Head of caudate nucleus (tissue), 42 donors: ENCODE measurements at regions of chr12 and their contacts with region 1.

Region 1: DNA sequence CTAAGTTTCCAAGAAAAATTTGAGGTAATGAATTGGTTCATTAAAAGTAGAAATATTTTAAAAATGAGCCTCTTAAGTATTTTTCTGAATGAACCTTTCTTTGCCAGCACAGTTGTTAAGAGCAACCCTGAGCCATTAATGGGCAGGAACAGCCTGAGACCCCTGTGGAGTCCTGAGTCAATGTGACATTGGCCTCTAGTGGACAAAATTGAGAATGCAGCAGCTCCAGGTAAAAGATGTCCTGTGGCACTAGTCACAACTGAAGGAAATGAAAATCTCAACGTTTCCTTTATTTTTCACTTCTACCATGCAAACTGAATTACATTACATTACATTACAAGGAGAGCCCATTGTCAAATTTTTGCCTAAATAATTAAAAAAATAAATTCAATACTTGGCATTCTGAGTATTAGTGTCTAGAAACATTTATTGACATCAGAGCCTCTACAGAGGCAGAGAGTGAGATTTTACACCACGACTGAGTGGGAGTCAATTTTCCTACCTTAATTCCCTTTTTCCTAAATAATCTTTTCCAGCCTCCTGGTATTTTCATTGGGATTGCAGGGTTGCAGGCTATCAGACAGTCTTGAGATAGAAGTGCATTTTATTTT is 135.7 kb downstream of the PPM1H start:
- DNase-seq: peak in 34 of 42 donors; percentile 26 to 90 (median 65)

Region 2: DNA sequence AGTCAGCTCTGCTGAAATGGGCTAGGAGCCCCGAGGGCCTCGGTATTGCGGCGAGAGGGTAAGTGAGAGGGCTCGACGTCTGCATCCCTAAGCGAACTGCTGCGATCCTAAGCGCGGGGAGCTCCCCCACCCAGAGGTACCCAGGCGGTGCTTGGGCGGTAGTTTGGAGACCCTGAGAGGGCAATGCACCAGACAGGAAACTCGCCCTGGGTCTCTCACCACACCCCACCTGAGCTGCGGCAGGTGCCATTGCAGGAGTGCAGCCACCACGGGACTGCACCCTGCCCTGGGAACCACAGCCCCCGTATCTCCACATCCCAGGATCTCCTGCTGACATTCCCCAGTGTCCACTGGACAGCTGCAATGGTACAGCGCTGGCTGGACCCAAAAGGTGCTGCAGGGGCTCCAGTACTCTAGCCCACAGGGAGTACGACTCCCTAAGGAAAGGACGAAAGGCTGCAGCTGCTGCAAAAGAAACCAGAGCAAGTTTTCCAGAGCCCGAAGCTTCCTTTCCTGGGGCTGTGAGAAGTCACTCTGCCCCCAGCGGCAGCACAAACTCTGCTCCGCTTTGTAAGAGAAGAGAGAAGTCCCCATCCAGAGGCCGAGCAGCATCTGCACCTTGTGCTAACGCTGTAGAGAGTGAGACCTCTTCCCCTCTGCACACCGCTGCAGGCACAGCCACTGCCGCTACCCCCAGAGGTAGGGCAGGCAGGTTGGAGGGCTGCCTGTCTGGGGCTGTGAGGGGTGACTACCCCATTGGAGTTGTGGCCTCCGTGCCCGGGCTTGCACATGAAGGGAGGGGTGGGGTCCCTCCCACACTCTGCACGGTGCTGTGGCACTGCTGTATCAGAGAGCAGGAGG is 363.7 kb before region 1 on chr12:
- intact Hi-C with region 1: loop called (anchors 5 kb)
- DNase-seq: peak; percentile 44 to 89 (median 68)

Region 3: GRCh38 chr12:62484233-62484632 is 315.0 kb before region 1 on chr12:
- intact Hi-C with region 1: no loop called
- DNase-seq: no peak

Region 4: GRCh38 chr12:63068857-63069442 is 269.7 kb after region 1 on chr12:
- intact Hi-C with region 1: loop called (anchors 5 kb)
- DNase-seq: peak in 14 of 42 donors; percentile 4 to 64 (median 14)